ENCODE measurements at regions of chr9 and their contacts with region 1.

Region 1: GRCh38 chr9:96449845-96450612 is at the start of gene HABP4:
- DNase-seq: peak; percentile 92 to 99 (median 97)

Region 2: DNA sequence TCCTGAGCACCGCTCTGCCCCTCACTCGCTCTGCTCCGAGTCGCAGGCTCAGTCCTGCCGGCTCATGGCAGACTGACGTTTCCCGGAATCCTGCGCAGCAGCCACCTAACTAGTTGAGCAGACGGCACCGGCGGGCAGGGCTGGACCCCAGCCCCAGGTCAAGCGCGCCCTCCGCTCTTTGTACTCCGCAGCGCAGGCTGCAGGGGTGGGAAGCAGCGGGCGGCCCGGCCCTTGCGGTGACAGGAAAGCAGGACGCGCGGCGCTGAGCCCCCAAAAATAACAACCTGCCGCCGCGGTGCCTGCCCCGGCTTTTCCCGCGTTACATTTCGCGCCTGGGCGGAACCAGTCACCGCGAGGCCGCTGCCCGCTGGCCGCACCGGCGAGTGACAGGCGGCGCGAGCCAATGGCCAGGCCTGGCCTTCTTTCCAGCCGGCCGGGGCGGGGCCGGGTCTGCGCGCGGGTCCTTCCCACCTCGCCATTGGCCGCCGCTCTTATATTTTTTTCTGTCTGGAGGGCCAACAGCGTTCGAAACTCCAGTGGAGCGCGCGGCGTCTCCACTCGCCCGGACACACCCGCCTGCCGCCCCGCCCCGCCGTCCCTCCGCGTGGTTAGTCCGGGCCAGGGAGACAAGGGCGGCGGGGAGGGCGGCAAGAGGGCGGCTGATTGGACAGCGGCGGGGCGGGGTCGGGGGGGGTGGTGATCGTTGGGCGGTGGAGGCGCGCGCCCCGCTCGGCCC is 31.8 kb before region 1 on chr9 and contains the start of gene ZNF367:
- intact Hi-C with region 1: loop called (anchors 2 kb)
- DNase-seq: peak; percentile 89 to 98 (median 96)

Region 3: DNA sequence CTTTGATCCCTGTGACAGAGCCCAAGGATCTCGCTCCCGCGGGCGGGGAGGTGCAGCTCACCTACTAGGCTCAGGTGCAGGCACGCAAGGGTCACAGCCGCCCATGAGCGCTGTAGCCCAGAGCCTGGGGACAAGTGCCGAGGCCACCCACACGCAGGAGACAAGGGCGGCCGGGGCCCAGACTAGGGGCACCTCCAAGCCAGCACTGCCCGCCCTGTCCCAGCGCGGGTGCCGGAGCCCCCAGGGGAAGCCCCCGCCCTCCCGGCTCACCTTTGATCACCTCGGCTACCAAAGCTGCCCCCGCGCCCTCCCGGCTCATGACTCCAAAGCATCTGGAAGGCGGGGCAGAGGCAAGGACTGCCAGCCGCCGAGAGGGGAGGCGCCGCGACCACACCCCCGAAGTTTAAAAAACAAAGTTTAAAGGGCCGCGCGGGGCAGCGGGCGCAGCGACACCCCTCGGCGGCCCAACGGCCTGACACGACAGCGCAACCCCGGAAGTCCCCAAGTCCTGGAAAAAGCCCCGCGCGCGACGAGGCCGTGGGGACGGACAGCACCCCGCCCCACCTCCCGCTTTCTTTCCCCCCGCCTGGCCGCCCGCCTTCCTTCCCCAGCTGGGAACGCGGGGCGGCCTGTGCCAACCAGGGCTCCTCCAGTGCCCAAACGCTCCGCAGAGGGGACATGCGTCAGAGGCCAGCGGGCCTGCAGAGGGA is 116.6 kb after region 1 on chr9:
- intact Hi-C with region 1: loop called (anchors 5 kb)
- DNase-seq: peak; percentile 62 to 94 (median 87)

Region 4: DNA sequence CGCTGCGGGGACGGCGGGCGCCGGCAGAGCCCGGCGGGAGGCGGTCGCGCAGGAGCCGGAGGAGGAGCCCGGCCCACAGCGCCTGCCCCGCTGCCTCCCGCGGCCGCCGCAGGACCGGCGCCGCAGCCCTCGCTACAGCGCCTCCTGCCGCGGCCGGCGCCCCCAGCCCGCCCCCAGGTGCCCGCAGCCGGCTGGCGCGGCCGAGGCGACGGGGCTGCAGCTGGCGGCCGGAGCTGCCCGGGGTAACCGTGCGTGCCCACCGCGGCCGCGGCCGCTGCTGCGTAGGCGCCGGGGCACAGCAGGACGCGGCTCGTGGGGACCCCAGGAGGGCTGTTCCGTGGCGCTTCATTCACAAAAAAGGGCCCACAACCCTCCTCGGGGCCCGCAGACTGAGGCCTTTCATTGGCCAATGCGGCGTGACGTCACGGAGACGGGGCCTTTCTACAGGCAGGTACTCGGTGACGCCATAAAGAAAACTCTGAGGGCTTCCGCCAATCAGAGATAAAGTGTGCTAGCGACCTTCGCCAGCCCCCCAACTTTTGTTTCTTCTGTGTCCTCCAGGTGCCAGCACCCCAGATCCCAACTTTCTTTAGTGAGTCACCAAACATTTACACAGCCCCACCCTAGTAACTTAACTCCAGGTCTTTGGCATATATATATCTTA is 169.6 kb after region 1 on chr9 and contains the start of gene CDC14B:
- intact Hi-C with region 1: loop called (anchors 2 kb)
- DNase-seq: peak; percentile 87 to 96 (median 94)

Region 5: DNA sequence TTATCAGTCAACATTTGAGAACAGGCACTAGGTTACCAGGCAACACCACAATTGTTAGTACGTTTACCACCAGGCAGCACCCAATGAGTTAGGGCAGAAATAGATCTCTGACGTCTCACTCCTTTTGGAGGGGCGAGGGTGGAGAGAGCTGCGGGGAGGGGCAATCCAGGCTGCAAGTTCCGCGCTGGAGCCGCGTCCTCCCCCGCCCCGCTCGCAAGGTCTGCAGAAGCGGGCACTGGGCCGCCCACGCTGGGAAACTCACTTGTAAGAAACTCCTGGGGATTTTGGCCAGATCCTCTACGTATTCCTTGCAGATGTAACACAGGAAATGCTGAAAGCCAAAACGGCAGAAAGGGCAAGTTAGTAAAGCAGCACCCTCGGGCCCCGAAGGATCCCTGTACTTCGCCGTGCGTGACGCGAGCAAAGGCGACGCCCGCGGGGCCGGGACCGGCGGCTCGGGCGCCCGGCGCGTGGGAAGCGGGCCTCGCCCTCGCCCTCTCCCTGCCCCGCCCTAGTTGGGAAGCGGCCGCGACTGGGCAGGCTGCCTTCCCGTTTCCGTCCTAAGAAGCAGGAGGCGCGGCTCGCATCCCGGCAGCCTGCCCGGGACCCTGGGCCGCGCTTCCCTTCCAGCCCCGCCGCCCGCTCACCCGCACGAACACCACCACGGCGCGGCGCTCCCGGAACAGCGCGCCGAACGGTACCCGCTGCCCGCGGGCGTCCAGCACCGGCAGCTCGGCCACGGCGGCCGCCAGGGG is 204.6 kb after region 1 on chr9:
- intact Hi-C with region 1: loop called (anchors 10 kb)
- DNase-seq: peak; percentile 54 to 93 (median 77)